Activated T-helper 2 cell treated with anti-CD3 and anti-CD28 coated beads, Interferon-gamma antibody, Interleukin-2, Interleukin-4, amounts not matched to agents 10 μg/mL and 5 μg/mL and 100 μg/mL, durations not matched to agents 14 hours and 24 hours and 36 hours (primary cell): ENCODE measurements at regions of chr6 and their contacts with region 1.

Region 1: DNA sequence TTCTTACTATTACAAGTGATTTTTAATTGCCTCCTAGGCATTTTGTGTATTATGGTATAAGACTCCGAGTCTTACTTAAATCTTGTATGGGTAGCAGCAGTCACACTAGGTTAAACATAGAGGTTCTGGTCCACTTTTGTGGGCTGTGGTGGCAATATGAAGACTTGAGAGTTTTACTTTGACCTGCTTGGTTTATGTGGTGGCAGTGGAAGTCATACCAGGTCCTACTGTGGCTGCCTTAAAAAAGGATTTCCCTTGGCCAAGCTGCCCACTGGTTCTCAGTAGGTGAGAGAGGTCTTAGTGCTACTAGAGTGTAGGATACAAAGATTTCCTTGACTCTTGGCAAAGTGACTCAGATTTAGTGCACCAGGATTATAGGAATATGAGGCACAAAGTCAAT is 44.2 kb upstream of the NKAIN2 start:
- DNase-seq: no peak
- H3K4me3 Mint-ChIP-seq: no peak overlapping the region
- H3K27ac Mint-ChIP-seq: no peak overlapping the region
- H3K4me1 Mint-ChIP-seq: no peaks in the 10 kb centered on the region
- H3K27me3 Mint-ChIP-seq: no peaks in the 10 kb centered on the region

Region 2: DNA sequence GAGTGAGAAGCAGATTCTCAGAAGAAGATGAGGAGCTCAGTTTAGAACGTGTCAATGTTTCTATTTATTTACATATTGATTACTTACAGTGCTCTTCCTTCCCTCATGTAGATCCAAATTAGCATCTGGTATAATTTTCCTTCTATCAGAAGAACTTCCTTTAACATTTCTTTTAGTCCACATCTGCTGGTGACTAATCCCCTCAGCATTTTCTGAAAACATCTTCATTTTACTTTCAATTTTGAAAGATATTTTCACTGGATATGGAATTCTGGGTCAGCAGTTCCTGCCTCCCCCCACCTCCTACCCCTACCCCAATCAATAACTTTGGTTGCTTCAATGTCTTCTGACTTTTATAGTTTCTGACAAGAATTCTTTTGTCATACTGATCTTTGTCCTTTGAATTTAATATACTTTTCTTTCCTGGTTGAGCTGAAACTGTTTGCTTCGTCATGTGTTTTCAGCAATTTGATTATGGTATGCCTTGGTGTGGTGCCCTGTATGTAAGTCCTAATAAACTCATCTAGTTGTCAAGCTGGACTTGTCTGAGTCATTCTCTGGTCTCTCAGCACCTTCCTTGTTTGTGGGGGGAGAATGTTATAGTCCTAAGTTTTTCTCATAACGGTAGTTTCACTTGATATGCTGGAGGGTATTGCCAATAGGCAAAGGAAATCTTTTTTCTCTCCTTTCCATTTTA is 913.4 kb before region 1 on chr6:
- intact Hi-C with region 1: loop called (anchors 10 kb)
- DNase-seq: no peak
- H3K4me3 Mint-ChIP-seq: no peak overlapping the region
- H3K27ac Mint-ChIP-seq: no peak overlapping the region
- H3K4me1 Mint-ChIP-seq: no peaks in the 10 kb centered on the region
- H3K27me3 Mint-ChIP-seq: peaks cover 1% of the 10 kb centered on the region

Region 3: GRCh38 chr6:123039431-123039830 is 720.0 kb before region 1 on chr6:
- intact Hi-C with region 1: no loop called
- DNase-seq: no peak
- H3K4me3 Mint-ChIP-seq: no peak overlapping the region
- H3K27ac Mint-ChIP-seq: no peak overlapping the region
- H3K4me1 Mint-ChIP-seq: no peaks in the 10 kb centered on the region
- H3K27me3 Mint-ChIP-seq: no peaks in the 10 kb centered on the region